Endothelial cell of umbilical vein (primary cell): ENCODE measurements at regions of chr15 and their contacts with region 1.

Region 1: DNA sequence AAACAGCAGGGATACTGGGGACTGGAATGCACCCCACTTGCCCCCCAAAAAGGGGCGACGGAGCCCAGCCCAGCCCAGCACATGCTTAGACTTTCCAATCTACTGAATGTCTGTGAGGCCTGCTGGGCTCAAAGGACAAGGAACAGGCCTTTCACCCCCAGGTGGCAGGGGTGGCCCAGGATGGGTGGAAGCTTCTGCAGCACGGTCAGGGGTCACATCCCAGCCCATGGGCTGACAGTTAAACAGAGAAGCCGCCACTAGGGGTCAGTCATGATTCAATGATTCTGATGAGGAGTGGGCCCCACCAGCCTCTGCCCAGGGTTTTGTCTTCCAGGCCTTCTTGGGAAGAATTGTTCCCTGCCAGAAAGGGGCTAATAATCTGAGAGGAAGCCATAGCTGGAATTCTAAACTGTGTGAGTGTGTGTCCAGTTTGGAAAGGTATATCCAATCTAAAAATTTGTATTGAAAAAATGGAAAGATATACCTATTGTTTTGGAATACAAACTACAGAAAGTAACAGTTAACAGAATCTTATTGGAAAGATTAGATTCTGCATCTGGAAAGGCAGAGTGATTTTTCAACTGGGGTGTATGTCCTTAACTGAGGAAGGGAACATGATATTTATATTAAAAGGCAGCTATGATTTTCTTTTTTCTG is 2.2 kb downstream of the CHRNB4 start:
- DNase-seq: peak; percentile 35
- H3K4me3 ChIP-seq: no peak overlapping the region
- H3K27ac ChIP-seq: no peak overlapping the region
- H3K4me1 ChIP-seq: peaks cover 2% of the 10 kb centered on the region
- H3K27me3 ChIP-seq: peaks cover 0 to 5% of the 10 kb centered on the region in 2 experiments
- CTCF ChIP-seq: peak; percentile 60 to 69
- POLR2A ChIP-seq: no peak

Region 2: GRCh38 chr15:77387365-77388105 is 1251.3 kb before region 1 on chr15:
- CTCF ChIA-PET with region 1: no interaction called
- POLR2A ChIA-PET with region 1: no interaction called
- dilution Hi-C with region 1: no loop called
- intact Hi-C with region 1: no loop called
- DNase-seq: no peak
- H3K4me3 ChIP-seq: no peak overlapping the region
- H3K27ac ChIP-seq: no peak overlapping the region
- H3K4me1 ChIP-seq: peaks cover 2% of the 10 kb centered on the region
- H3K27me3 ChIP-seq: no peaks in the 10 kb centered on the region
- CTCF ChIP-seq: no peak
- POLR2A ChIP-seq: no peak

Region 3: DNA sequence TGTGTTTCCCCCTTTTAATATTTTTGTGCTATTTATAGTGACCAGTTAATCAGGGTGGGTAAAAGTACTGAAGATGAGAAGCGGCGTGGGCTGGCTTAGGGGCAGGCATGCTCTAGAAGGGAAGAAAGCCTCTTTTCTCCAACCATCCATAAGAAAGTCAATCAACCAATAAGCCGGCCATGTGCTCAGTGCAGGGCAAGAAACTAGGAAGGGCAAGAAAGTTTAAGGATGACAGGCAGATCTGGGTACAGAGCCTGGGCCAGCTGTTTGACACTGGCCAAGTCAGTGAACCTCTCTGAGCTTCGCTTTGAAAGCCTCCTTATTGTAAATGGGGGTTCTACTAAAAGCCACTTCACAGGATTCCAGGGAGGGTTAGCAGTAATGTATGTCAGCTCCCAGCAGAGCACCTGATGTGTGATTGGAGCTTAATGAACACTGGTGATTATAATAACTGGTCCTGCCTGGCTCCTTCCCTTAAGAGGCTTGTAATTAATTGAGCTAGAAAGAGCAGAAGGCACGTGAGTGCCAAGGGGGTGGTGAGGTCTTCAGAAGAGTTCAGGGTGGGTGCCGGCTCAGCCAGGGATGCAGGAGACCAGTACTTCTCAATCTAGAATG is 12.3 kb before region 1 on chr15:
- CTCF ChIA-PET with region 1: interaction called, 12 read pairs
- POLR2A ChIA-PET with region 1: no interaction called
- dilution Hi-C with region 1: no loop called
- intact Hi-C with region 1: no loop called
- DNase-seq: no peak
- H3K4me3 ChIP-seq: no peak overlapping the region
- H3K27ac ChIP-seq: no peak overlapping the region
- H3K4me1 ChIP-seq: no peaks in the 10 kb centered on the region
- H3K27me3 ChIP-seq: peaks cover 15 to 23% of the 10 kb centered on the region in 2 experiments
- CTCF ChIP-seq: no peak
- POLR2A ChIP-seq: no peak

Region 4: DNA sequence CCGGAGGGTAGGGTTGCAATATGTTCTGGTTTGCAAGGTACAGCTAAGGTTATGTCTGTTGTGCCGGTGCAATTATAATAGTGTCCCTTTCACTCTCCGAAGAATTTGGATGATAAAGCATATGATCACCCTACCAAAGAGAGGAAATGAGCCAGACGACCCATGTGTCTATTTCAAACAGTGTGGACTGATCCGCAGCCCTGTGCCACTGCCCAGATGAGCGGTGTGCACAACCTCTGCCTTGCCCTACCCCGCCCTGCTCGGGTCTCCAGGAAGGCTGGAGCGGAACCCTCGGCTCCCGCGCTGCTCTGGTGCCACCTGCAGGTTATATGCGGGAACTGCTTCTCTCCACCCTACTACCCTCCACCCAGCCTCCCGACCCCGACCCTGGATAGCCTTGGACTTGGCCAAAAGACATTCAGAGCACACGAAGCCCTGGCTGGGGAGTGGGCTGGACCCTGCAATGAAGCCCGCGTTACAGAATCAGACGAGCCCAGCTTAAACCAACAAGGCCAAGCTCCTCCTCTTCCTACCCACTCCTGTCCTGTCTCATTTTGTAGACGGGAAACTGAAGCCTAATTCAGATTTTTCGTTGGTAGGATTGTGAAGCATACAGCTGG is 70.6 kb after region 1 on chr15:
- CTCF ChIA-PET with region 1: interaction called, 29 read pairs
- POLR2A ChIA-PET with region 1: no interaction called
- dilution Hi-C with region 1: no loop called
- intact Hi-C with region 1: loop called (anchors 1 kb)
- DNase-seq: peak; percentile 42
- H3K4me3 ChIP-seq: no peak overlapping the region
- H3K27ac ChIP-seq: no peak overlapping the region
- H3K4me1 ChIP-seq: no peaks in the 10 kb centered on the region
- H3K27me3 ChIP-seq: peaks cover 12 to 23% of the 10 kb centered on the region in 2 experiments
- CTCF ChIP-seq: peak; percentile 68 to 90
- POLR2A ChIP-seq: no peak

Region 5: GRCh38 chr15:78739996-78740903 is 101.5 kb after region 1 on chr15:
- CTCF ChIA-PET with region 1: interaction called, 23 read pairs
- POLR2A ChIA-PET with region 1: no interaction called
- dilution Hi-C with region 1: no loop called
- intact Hi-C with region 1: no loop called
- DNase-seq: peak; percentile 26
- H3K4me3 ChIP-seq: no peak overlapping the region
- H3K27ac ChIP-seq: no peak overlapping the region
- H3K4me1 ChIP-seq: no peaks in the 10 kb centered on the region
- H3K27me3 ChIP-seq: peaks cover 0 to 2% of the 10 kb centered on the region in 2 experiments
- CTCF ChIP-seq: peak; percentile 46 to 77
- POLR2A ChIP-seq: no peak

Region 6: GRCh38 chr15:78790030-78790429 is 151.2 kb after region 1 on chr15:
- CTCF ChIA-PET with region 1: no interaction called
- POLR2A ChIA-PET with region 1: no interaction called
- dilution Hi-C with region 1: no loop called
- intact Hi-C with region 1: no loop called
- DNase-seq: no peak
- H3K4me3 ChIP-seq: no peak overlapping the region
- H3K27ac ChIP-seq: no peak overlapping the region
- H3K4me1 ChIP-seq: no peaks in the 10 kb centered on the region
- H3K27me3 ChIP-seq: no peaks in the 10 kb centered on the region
- CTCF ChIP-seq: no peak
- POLR2A ChIP-seq: no peak

Region 7: DNA sequence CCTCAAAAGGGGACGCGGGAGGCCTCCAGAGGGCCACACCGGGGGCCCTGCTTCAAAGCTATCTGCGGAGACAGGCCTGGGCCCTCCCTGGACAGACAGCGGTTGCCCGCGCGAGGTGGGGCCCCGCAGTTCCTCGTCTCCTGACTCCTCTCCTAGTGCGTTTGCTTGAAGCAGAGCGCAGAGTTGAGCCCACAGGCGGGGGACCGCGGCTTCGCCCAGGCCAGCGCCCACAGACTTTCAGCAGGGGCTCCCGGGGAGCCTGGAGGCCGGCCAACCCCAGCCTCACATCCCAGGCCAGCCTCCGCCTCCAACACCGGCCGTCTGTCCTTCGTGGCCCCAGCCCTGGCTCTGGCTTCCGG is 173.0 kb after region 1 on chr15:
- CTCF ChIA-PET with region 1: no interaction called
- POLR2A ChIA-PET with region 1: no interaction called
- dilution Hi-C with region 1: no loop called
- intact Hi-C with region 1: no loop called
- DNase-seq: peak; percentile 18
- H3K4me3 ChIP-seq: peak overlapping the region in 1 of 3 experiments; percentile 69
- H3K27ac ChIP-seq: peak overlapping the region; percentile 55
- H3K4me1 ChIP-seq: peaks cover 14% of the 10 kb centered on the region
- H3K27me3 ChIP-seq: no peaks in the 10 kb centered on the region
- CTCF ChIP-seq: no peak
- POLR2A ChIP-seq: no peak

Region 8: DNA sequence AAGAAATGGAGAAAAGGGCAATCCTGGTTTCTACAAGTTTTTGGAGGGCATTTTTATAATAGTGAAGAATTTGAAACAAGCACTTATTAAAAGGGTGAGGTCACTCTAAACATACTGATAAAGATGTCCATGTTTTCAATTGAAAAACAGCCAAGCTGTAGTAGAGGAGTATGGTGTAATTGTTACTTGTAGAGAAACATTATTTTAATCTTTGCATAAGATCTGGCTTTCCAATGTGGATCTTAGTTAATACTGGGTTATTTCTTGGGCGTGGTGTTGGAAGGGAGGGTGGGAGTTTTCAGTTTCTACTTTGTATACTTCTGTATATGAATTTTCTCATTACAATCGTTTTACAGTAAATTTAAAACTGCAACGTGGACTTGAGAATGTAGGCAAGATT is 256.7 kb after region 1 on chr15:
- CTCF ChIA-PET with region 1: no interaction called
- POLR2A ChIA-PET with region 1: no interaction called
- dilution Hi-C with region 1: no loop called
- intact Hi-C with region 1: no loop called
- DNase-seq: no peak
- H3K4me3 ChIP-seq: no peak overlapping the region
- H3K27ac ChIP-seq: no peak overlapping the region
- H3K4me1 ChIP-seq: no peaks in the 10 kb centered on the region
- H3K27me3 ChIP-seq: no peaks in the 10 kb centered on the region
- CTCF ChIP-seq: no peak
- POLR2A ChIP-seq: no peak